ENCODE measurements at regions of chr1 and their contacts with region 1.

Region 1: GRCh38 chr1:22451702-22452474 is at the start of gene ZBTB40:
- DNase-seq: peak; percentile 95 to 96
- ATAC-seq: peak; percentile 92 to 98 (median 97)
- H3K4me3 ChIP-seq: peak within 1 kb of the TSS; percentile 84
- H3K4me3 Mint-ChIP-seq: peak within 1 kb of the TSS; percentile 98
- H3K27ac ChIP-seq: peak within 1 kb of the TSS; percentile 88
- H3K27ac Mint-ChIP-seq: peak within 1 kb of the TSS; percentile 97 to 98
- H3K4me1 ChIP-seq: peaks cover 14% of the 10 kb centered on the region
- H3K4me1 Mint-ChIP-seq: peaks cover 20 to 34% of the 10 kb centered on the region in 2 donors
- H3K27me3 ChIP-seq: no peaks in the 10 kb centered on the region
- H3K27me3 Mint-ChIP-seq: no peaks in the 10 kb centered on the region
- CTCF ChIP-seq: no peak
- total RNA-seq, gene ZBTB40: 32.9 to 37.6 (median 36.7) TPM

Region 2: DNA sequence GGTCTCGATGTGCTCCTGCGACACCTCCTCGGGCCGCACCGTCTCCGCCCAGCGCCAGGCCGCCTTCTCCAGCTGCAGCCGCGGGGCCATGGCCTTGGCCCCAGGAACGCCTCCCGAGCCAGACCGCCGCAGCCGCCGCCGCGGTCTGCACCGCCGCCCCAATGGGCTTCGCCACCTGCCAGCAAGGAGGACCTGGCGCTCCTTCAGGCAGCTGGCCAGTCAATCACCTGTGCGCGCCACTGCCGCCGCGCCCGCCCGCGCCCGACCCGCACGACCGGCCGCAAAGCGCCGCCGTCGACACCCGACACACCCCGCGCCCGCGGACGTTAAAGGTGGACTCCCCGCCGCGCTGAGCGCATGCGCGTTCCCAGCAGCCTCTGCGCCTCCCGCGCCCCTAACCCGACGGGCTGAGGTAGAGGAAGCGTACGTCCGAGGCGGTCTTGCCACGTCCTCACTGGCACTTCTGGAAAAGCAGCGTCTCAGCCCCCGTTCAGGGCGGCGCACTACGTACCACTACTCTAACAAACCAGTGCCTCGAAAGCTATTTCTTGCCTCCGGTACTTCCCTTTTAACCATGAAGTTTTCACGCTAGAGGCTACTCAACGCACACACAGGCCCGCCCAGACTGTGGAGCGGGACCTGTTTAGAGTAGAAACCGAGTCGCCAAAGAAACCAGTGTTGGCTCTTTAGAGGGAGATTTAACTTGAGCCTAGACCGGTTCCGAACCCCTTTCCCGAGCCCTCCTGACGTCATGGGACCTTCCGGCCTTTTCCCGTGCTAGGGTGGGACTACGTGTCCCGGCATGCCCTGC is 668.8 kb before region 1 on chr1 and contains the start of gene USP48:
- intact Hi-C with region 1: loop called (anchors 5 kb)
- DNase-seq: peak; percentile 97 to 99
- ATAC-seq: peak; percentile 84 to 95 (median 88)
- H3K4me3 ChIP-seq: peak within 1 kb of the TSS; percentile 78
- H3K4me3 Mint-ChIP-seq: peak within 1 kb of the TSS; percentile 98
- H3K27ac ChIP-seq: peak within 1 kb of the TSS; percentile 97
- H3K27ac Mint-ChIP-seq: peak within 1 kb of the TSS; percentile 100
- H3K4me1 ChIP-seq: peaks cover 20% of the 10 kb centered on the region
- H3K4me1 Mint-ChIP-seq: peaks cover 30 to 34% of the 10 kb centered on the region in 2 donors
- H3K27me3 ChIP-seq: no peaks in the 10 kb centered on the region
- H3K27me3 Mint-ChIP-seq: peaks cover 0 to 4% of the 10 kb centered on the region in 2 donors
- CTCF ChIP-seq: no peak
- total RNA-seq, gene USP48: 71.4 to 127 (median 90.5) TPM

Region 3: DNA sequence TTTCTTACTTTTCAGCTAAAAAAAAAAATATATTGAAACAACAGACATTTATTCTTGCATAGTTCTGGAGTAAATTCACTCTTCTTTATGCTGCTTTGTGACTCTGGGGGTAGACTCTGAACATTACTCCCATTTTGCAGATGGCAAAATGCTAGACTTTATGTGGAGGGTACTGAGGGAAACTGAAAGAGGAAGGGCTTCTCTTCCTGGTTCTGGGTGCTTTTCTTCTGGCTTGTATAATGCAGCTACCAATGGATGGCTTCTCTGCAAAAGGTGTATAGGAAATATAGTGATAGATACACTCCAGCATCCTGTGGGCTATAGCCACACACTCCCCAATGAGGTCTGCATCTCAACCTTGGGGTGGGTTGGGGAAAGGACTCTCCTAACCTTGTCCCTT is 19.9 kb before region 1 on chr1:
- intact Hi-C with region 1: loop called (anchors 2 kb)
- DNase-seq: no peak
- ATAC-seq: no peak
- H3K4me3 ChIP-seq: no peak overlapping the region
- H3K4me3 Mint-ChIP-seq: no peak overlapping the region
- H3K27ac ChIP-seq: no peak overlapping the region
- H3K27ac Mint-ChIP-seq: no peak overlapping the region
- H3K4me1 ChIP-seq: peaks cover 3% of the 10 kb centered on the region
- H3K4me1 Mint-ChIP-seq: peaks cover 4% of the 10 kb centered on the region in 2 donors
- H3K27me3 ChIP-seq: no peaks in the 10 kb centered on the region
- H3K27me3 Mint-ChIP-seq: peaks cover 7 to 33% of the 10 kb centered on the region in 2 donors
- CTCF ChIP-seq: no peak

Measured in natural killer cell (primary cell).